ENCODE measurements at regions of chr9 and their contacts with region 1.

Region 1: DNA sequence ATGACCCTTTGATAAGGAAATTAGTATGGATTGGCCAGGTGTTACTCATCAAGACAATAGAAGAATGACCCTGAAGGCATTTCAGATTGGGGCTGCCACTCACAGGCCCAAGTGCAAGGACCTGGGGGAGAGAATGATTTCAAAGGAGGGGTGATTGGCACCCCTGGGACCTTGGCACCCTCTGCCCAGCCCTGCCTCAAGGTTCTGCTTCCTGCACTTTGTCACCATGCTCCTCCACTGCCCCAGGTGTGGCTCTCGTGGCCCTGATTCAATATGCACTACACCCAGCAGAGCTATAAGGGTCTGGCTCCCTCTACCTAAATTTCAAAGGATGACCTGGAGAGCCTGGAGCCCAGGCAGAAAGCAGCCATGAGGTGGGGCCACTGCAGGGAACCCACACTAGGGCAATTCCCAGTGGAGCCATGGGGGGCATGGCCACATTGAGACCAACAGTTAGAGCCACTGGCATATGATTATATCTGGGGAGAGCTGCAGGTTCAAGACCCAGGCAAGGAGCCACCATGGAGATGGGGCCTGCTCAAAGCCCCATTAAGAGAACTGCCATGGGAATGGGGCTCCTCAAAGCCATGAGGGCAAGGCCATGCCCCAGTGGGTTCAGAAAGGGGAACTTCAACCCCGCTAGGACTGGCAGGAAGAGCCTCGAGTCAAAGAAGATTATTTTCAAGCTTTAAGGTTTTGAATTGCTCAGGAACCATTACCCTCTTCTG is 93.0 kb downstream of the CEMIP2 start:
- DNase-seq: no peak
- ATAC-seq: no peak
- H3K4me3 Mint-ChIP-seq: no peak overlapping the region
- H3K27ac Mint-ChIP-seq: no peak overlapping the region
- H3K4me1 Mint-ChIP-seq: peaks cover 21% of the 10 kb centered on the region
- H3K27me3 Mint-ChIP-seq: no peaks in the 10 kb centered on the region
- CTCF ChIP-seq: no peak

Region 2: GRCh38 chr9:71614409-71615010 is 60.8 kb before region 1 on chr9:
- CTCF ChIA-PET with region 1: interaction called, 3 read pairs
- POLR2A ChIA-PET with region 1: no interaction called
- intact Hi-C with region 1: loop called (anchors 10 kb)
- DNase-seq: no peak
- ATAC-seq: no peak
- H3K4me3 Mint-ChIP-seq: no peak overlapping the region
- H3K27ac Mint-ChIP-seq: no peak overlapping the region
- H3K4me1 Mint-ChIP-seq: no peaks in the 10 kb centered on the region
- H3K27me3 Mint-ChIP-seq: no peaks in the 10 kb centered on the region
- CTCF ChIP-seq: no peak

Region 3: GRCh38 chr9:71663931-71664459 is 11.3 kb before region 1 on chr9:
- CTCF ChIA-PET with region 1: no interaction called
- POLR2A ChIA-PET with region 1: no interaction called
- intact Hi-C with region 1: no loop called
- DNase-seq: no peak
- ATAC-seq: no peak
- H3K4me3 Mint-ChIP-seq: no peak overlapping the region
- H3K27ac Mint-ChIP-seq: no peak overlapping the region
- H3K4me1 Mint-ChIP-seq: no peaks in the 10 kb centered on the region
- H3K27me3 Mint-ChIP-seq: no peaks in the 10 kb centered on the region
- CTCF ChIP-seq: no peak

Region 4: GRCh38 chr9:71819115-71819739 is 143.9 kb after region 1 on chr9:
- CTCF ChIA-PET with region 1: no interaction called
- POLR2A ChIA-PET with region 1: no interaction called
- intact Hi-C with region 1: no loop called
- DNase-seq: peak; percentile 61
- ATAC-seq: no peak
- H3K4me3 Mint-ChIP-seq: no peak overlapping the region
- H3K27ac Mint-ChIP-seq: no peak overlapping the region
- H3K4me1 Mint-ChIP-seq: peaks cover 16% of the 10 kb centered on the region
- H3K27me3 Mint-ChIP-seq: no peaks in the 10 kb centered on the region
- CTCF ChIP-seq: peak; percentile 91